Caco-2 (cell line): ENCODE measurements at regions of chr10 and their contacts with region 1.

Region 1: DNA sequence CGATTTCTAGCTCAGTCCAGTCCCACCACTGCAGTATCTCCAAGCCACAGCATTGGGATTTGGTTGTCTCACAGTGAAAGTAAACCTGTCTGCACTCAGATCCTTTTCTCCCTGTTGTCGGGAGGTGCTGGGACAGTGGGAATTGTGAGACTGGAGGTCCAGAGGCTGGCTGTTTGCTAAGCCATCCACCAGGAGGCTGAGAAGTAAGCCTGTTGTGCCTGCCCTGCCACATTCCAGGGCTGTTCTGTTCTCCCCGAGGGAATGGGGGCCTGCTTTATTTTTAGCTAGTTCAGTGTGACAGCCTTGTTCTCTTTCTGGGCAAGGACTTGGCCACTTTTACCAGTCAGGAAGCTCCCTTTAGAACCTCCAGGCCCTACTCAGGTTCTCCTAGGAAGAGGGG is 54.9 kb downstream of the HK1 start:
- DNase-seq: peak; percentile 93 to 95
- H3K4me3 ChIP-seq: no peak overlapping the region
- H3K4me3 Mint-ChIP-seq: peak overlapping the region; percentile 52
- H3K27ac Mint-ChIP-seq: peak overlapping the region; percentile 86
- H3K4me1 ChIP-seq: peaks cover 70% of the 10 kb centered on the region
- H3K4me1 Mint-ChIP-seq: peaks cover 55% of the 10 kb centered on the region
- H3K27me3 ChIP-seq: no peaks in the 10 kb centered on the region
- H3K27me3 Mint-ChIP-seq: no peaks in the 10 kb centered on the region
- CTCF ChIP-seq: peak; percentile 69 to 85

Region 2: GRCh38 chr10:69269761-69270160 is 63.4 kb before region 1 on chr10:
- CTCF ChIA-PET with region 1: no interaction called
- POLR2A ChIA-PET with region 1: no interaction called
- intact Hi-C with region 1: no loop called
- DNase-seq: no peak
- H3K4me3 ChIP-seq: no peak overlapping the region
- H3K4me3 Mint-ChIP-seq: no peak overlapping the region
- H3K27ac Mint-ChIP-seq: no peak overlapping the region
- H3K4me1 ChIP-seq: no peaks in the 10 kb centered on the region
- H3K4me1 Mint-ChIP-seq: no peaks in the 10 kb centered on the region
- H3K27me3 ChIP-seq: no peaks in the 10 kb centered on the region
- H3K27me3 Mint-ChIP-seq: peaks cover 2% of the 10 kb centered on the region
- CTCF ChIP-seq: no peak

Region 3: DNA sequence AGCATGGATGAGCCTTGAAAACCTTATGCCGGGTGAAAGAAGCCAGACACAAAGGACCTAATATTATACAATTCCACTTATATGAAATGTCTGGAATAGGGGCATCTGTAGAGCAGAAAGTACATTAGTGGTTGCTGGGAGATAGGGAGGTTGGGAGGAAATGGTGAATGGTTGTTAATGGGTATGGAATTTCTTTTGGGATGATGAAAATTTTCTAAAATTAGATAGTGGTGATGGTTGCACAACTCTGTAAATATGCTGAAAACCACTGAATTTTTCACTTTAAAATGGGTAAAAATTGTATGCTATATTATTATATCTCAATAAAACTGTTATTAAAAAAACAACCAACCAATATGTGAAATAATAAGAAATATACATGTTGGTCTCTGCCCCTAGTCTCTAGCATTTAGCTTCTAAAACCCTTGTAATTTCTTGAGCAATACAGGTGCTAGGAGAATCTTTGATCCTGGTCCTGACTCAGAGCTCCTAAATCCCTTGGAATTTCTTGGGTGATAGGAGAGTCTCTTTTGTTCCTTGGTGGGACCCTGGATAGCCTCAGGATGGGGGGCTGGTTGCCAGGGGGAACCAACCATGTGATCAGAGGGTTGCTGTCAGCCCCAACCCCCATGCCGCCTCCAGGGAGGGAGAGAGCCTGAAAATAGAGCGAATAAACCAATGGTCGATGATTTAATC is 19.5 kb after region 1 on chr10:
- CTCF ChIA-PET with region 1: interaction called, 6 read pairs
- POLR2A ChIA-PET with region 1: no interaction called
- intact Hi-C with region 1: loop called (anchors 1 kb)
- DNase-seq: peak in 1 of 2 experiments; percentile 61
- H3K4me3 ChIP-seq: no peak overlapping the region
- H3K4me3 Mint-ChIP-seq: peak overlapping the region; percentile 16
- H3K27ac Mint-ChIP-seq: peak overlapping the region; percentile 93
- H3K4me1 ChIP-seq: peaks cover 15% of the 10 kb centered on the region
- H3K4me1 Mint-ChIP-seq: peaks cover 29% of the 10 kb centered on the region
- H3K27me3 ChIP-seq: no peaks in the 10 kb centered on the region
- H3K27me3 Mint-ChIP-seq: no peaks in the 10 kb centered on the region
- CTCF ChIP-seq: no peak

Region 4: DNA sequence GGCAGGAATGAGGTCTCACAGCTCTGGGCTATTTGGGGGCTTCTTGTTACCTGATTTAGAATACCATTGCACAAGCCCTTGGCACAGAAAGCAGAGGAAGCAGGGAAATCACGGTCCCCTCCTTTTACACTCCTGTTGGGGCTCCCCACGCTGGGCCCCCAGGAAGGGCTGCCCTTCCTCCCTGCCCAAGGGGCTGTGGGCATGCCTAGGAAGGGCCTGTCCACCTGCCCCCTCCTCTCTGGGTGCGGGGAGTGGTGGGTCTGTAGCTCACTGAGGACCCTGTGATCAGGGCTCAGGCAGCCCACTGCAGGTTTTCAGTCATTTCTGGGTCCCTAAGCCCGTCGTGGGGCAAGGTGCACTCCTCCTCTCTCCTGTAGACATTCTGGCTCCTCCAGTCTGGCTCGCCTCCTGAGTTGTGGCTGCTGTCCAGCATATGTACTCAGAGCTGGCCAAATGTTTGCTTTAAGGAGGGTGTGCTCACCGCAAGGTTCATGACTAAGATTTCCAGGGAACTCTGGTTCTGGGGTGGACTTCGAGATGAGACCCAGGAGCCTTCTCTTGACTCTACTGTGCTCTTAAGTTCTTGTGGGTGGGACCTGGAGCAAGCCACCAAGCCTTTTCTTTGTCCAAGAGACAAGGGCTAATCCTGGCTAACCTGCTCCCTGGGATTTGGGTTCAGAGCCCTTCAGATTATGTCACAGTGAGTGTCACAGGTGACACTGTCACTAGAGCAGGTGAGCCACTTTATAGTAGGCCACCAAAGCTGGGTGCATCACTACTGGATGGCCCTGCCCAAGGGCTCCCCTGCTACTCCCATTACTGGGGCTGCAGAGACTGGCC is 27.5 kb after region 1 on chr10:
- CTCF ChIA-PET with region 1: interaction called, 11 read pairs
- POLR2A ChIA-PET with region 1: no interaction called
- intact Hi-C with region 1: no loop called
- DNase-seq: peak; percentile 75
- H3K4me3 ChIP-seq: no peak overlapping the region
- H3K4me3 Mint-ChIP-seq: no peak overlapping the region
- H3K27ac Mint-ChIP-seq: peak overlapping the region; percentile 37
- H3K4me1 ChIP-seq: peaks cover 13% of the 10 kb centered on the region
- H3K4me1 Mint-ChIP-seq: peaks cover 24% of the 10 kb centered on the region
- H3K27me3 ChIP-seq: no peaks in the 10 kb centered on the region
- H3K27me3 Mint-ChIP-seq: no peaks in the 10 kb centered on the region
- CTCF ChIP-seq: no peak

Region 5: GRCh38 chr10:69383558-69383957 is 50.4 kb after region 1 on chr10:
- CTCF ChIA-PET with region 1: interaction called, 4 read pairs
- POLR2A ChIA-PET with region 1: no interaction called
- intact Hi-C with region 1: loop called (anchors 1 kb)
- DNase-seq: peak in 1 of 2 experiments; percentile 59
- H3K4me3 ChIP-seq: no peak overlapping the region
- H3K4me3 Mint-ChIP-seq: no peak overlapping the region
- H3K27ac Mint-ChIP-seq: peak overlapping the region; percentile 29
- H3K4me1 ChIP-seq: peaks cover 19% of the 10 kb centered on the region
- H3K4me1 Mint-ChIP-seq: peaks cover 34% of the 10 kb centered on the region
- H3K27me3 ChIP-seq: no peaks in the 10 kb centered on the region
- H3K27me3 Mint-ChIP-seq: no peaks in the 10 kb centered on the region
- CTCF ChIP-seq: peak; percentile 16 to 50

Region 6: GRCh38 chr10:69527961-69528360 is 194.8 kb after region 1 on chr10:
- CTCF ChIA-PET with region 1: no interaction called
- POLR2A ChIA-PET with region 1: no interaction called
- intact Hi-C with region 1: no loop called
- DNase-seq: no peak
- H3K4me3 ChIP-seq: no peak overlapping the region
- H3K4me3 Mint-ChIP-seq: no peak overlapping the region
- H3K27ac Mint-ChIP-seq: no peak overlapping the region
- H3K4me1 ChIP-seq: no peaks in the 10 kb centered on the region
- H3K4me1 Mint-ChIP-seq: no peaks in the 10 kb centered on the region
- H3K27me3 ChIP-seq: no peaks in the 10 kb centered on the region; the same call in 1 of the 2 replicates
- H3K27me3 Mint-ChIP-seq: peaks cover 17% of the 10 kb centered on the region
- CTCF ChIP-seq: no peak